ENCODE measurements at regions of chr4 and their contacts with region 1.

Region 1: GRCh38 chr4:26459054-26459755 is 31.1 kb downstream of the CCKAR start:
- DNase-seq: peak; percentile 63
- CTCF ChIP-seq: peak; percentile 63

Region 2: DNA sequence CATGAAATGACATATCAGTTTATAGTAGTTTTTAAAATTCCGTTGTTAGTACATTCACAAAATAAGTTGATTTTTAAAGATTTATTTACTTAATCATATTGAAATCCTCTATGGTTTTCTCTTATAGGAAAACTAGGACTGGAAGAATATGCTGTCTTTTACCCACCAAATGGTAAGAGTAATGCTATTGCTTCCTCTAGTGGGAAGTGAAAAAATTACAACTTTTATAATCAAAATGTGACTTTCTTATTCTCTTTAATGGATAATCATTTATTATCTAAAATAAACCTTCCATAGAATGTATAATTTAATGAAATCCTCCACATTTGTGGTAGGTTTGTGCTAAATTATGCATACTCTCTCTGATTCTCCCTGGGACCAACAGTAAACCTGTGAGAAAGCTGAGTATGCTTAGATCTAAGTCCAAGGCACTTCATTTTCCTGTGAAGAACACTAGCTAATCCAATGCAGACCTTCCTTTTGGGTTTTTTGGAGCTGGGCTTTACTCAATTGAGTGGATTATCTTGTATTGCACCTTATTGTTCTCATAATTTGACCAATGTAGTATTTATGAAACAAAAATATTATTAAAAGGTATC is 260.8 kb after region 1 on chr4:
- in situ Hi-C with region 1: loop called (anchors 25 kb)
- DNase-seq: no peak
- CTCF ChIP-seq: peak; percentile 47

Region 3: GRCh38 chr4:26826721-26827120 is 367.5 kb after region 1 on chr4:
- in situ Hi-C with region 1: no loop called
- DNase-seq: peak; percentile 64
- CTCF ChIP-seq: no peak